ENCODE measurements at regions of chr1 and their contacts with region 1.

Region 1: DNA sequence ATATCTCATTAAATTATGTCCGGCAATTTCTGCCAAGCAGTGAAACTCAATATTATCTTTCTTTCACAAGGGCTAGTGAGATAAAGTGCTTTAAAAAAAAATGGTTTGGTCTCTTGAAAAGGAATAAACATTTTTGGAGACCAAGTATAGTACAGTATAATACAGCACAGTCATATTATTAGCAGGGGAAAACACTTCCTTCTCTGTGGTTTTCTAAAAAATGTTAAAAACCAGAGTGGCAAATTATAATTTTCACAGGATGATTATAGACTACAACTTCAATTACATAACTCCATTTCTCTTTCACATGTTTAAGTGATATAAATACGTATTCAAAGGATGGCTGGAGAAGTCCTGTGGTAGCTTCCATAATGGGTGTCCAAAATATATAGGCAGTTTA is 170.3 kb upstream of the DMRTA2 start:
- DNase-seq: no peak
- H3K4me3 Mint-ChIP-seq: no peak overlapping the region
- H3K27ac Mint-ChIP-seq: no peak overlapping the region
- H3K4me1 Mint-ChIP-seq: no peaks in the 10 kb centered on the region
- H3K27me3 Mint-ChIP-seq: no peaks in the 10 kb centered on the region

Region 2: GRCh38 chr1:50318428-50318827 is 275.1 kb before region 1 on chr1:
- CTCF ChIA-PET with region 1: no interaction called
- POLR2A ChIA-PET with region 1: no interaction called
- DNase-seq: no peak
- H3K4me3 Mint-ChIP-seq: no peak overlapping the region
- H3K27ac Mint-ChIP-seq: no peak overlapping the region
- H3K4me1 Mint-ChIP-seq: no peaks in the 10 kb centered on the region
- H3K27me3 Mint-ChIP-seq: peaks cover 2% of the 10 kb centered on the region

Region 3: GRCh38 chr1:50605186-50605875 is 11.8 kb after region 1 on chr1:
- CTCF ChIA-PET with region 1: interaction called, 13 read pairs
- POLR2A ChIA-PET with region 1: no interaction called
- DNase-seq: no peak
- H3K4me3 Mint-ChIP-seq: no peak overlapping the region
- H3K27ac Mint-ChIP-seq: no peak overlapping the region
- H3K4me1 Mint-ChIP-seq: no peaks in the 10 kb centered on the region
- H3K27me3 Mint-ChIP-seq: no peaks in the 10 kb centered on the region